Caco-2 (cell line): ENCODE measurements at regions of chr6 and their contacts with region 1.

Region 1: GRCh38 chr6:55853008-55854001 is 22.1 kb downstream of the BMP5 start:
- DNase-seq: no peak
- H3K4me3 ChIP-seq: no peak overlapping the region
- H3K4me3 Mint-ChIP-seq: no peak overlapping the region
- H3K27ac Mint-ChIP-seq: no peak overlapping the region
- H3K4me1 ChIP-seq: no peaks in the 10 kb centered on the region
- H3K4me1 Mint-ChIP-seq: no peaks in the 10 kb centered on the region
- H3K27me3 ChIP-seq: no peaks in the 10 kb centered on the region
- H3K27me3 Mint-ChIP-seq: no peaks in the 10 kb centered on the region
- CTCF ChIP-seq: no peak

Region 2: DNA sequence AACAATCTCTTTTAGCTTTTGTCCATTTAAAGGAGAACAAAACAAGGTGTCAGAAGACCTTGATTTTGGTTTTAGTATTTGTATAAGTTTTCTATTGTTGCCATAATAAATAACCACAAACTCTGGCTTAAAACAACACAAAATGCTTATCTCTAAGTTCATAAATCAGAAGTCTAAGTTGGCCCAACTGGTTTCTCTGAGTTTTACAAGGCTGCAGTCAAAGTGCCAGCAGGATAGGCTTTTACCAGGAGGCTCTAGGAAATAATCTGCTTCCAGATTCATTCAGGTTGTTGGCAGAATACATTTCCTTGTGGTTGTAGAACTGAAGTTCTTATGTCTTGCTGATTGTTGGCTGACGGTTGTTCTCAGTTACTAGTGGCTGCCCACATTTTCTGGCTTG is 127.2 kb before region 1 on chr6:
- CTCF ChIA-PET with region 1: no interaction called
- POLR2A ChIA-PET with region 1: no interaction called
- intact Hi-C with region 1: no loop called
- DNase-seq: no peak
- H3K4me3 ChIP-seq: no peak overlapping the region
- H3K4me3 Mint-ChIP-seq: no peak overlapping the region
- H3K27ac Mint-ChIP-seq: no peak overlapping the region
- H3K4me1 ChIP-seq: no peaks in the 10 kb centered on the region
- H3K4me1 Mint-ChIP-seq: no peaks in the 10 kb centered on the region
- H3K27me3 ChIP-seq: no peaks in the 10 kb centered on the region
- H3K27me3 Mint-ChIP-seq: no peaks in the 10 kb centered on the region
- CTCF ChIP-seq: no peak

Region 3: GRCh38 chr6:55746473-55746872 is 106.8 kb before region 1 on chr6:
- CTCF ChIA-PET with region 1: no interaction called
- POLR2A ChIA-PET with region 1: interaction called, 10 read pairs
- intact Hi-C with region 1: no loop called
- DNase-seq: no peak
- H3K4me3 ChIP-seq: no peak overlapping the region
- H3K4me3 Mint-ChIP-seq: no peak overlapping the region
- H3K27ac Mint-ChIP-seq: no peak overlapping the region
- H3K4me1 ChIP-seq: no peaks in the 10 kb centered on the region
- H3K4me1 Mint-ChIP-seq: no peaks in the 10 kb centered on the region
- H3K27me3 ChIP-seq: no peaks in the 10 kb centered on the region
- H3K27me3 Mint-ChIP-seq: no peaks in the 10 kb centered on the region
- CTCF ChIP-seq: no peak